ENCODE measurements at regions of chr2 and their contacts with region 1.

Region 1: GRCh38 chr2:27754138-27754588 is 17.4 kb upstream of the MRPL33 start:
- DNase-seq: peak; percentile 79
- ATAC-seq: peak; percentile 86
- H3K4me3 ChIP-seq: peak overlapping the region; percentile 82 to 90 (median 89)
- H3K27ac ChIP-seq: no peak overlapping the region
- H3K4me1 ChIP-seq: peaks cover 62% of the 10 kb centered on the region
- H3K27me3 ChIP-seq: no peaks in the 10 kb centered on the region
- CTCF ChIP-seq: peak; percentile 99
- EP300 ChIP-seq: peak in 1 of 2 experiments; percentile 39; a peak in 2 of 4 replicates
- POLR2A ChIP-seq: no peak
- RAD21 ChIP-seq: peak; percentile 98

Region 2: GRCh38 chr2:27390822-27391679 is 363.1 kb before region 1 on chr2:
- CTCF ChIA-PET with region 1: no interaction called
- POLR2A ChIA-PET with region 1: no interaction called
- in situ Hi-C with region 1: no loop called
- intact Hi-C with region 1: no loop called
- DNase-seq: no peak
- ATAC-seq: no peak
- H3K4me3 ChIP-seq: no peak overlapping the region
- H3K27ac ChIP-seq: no peak overlapping the region
- H3K4me1 ChIP-seq: no peaks in the 10 kb centered on the region
- H3K27me3 ChIP-seq: no peaks in the 10 kb centered on the region
- CTCF ChIP-seq: no peak
- EP300 ChIP-seq: no peak
- POLR2A ChIP-seq: no peak
- RAD21 ChIP-seq: no peak

Region 3: DNA sequence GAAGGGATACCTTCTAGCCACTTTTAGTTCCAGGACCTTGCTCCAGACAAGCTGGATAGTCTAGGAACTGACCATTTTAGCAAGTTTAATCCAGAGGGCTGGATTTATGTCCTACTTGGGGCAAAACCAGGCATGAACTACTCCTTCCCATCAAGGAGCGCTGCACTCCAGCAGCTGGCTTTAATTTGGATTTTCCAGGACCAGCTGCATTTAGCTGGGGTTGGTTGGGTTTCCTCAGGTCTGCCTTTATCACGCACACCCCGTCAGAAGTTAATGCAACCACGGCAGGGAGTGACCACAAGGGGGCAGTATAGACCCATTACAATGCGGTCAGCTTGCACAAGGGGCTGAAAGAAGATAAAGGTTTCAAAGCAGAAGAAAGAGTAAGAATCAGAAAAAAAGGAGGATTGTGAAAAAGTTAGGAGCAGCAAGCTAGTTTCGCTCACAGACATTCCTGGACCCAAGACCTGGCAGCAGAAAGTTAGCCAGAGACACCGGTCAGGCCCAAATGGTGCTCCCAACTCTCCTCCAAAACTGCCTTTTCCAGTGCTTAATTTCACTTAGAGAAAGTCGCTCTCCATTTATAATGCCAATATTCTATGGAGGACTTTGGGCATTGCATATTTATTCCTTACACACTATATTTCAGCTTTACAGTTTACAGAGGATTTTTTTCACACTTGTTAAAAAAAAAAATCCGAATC is 50.4 kb before region 1 on chr2:
- CTCF ChIA-PET with region 1: interaction called, 4 read pairs
- POLR2A ChIA-PET with region 1: interaction called, 13 read pairs
- in situ Hi-C with region 1: loop called (anchors 5 kb)
- intact Hi-C with region 1: loop called (anchors 1 kb)
- DNase-seq: peak; percentile 80
- ATAC-seq: peak; percentile 85
- H3K4me3 ChIP-seq: no peak overlapping the region
- H3K27ac ChIP-seq: no peak overlapping the region
- H3K4me1 ChIP-seq: peaks cover 55% of the 10 kb centered on the region
- H3K27me3 ChIP-seq: no peaks in the 10 kb centered on the region
- CTCF ChIP-seq: peak; percentile 96
- EP300 ChIP-seq: no peak
- POLR2A ChIP-seq: no peak
- RAD21 ChIP-seq: peak; percentile 87

Region 4: DNA sequence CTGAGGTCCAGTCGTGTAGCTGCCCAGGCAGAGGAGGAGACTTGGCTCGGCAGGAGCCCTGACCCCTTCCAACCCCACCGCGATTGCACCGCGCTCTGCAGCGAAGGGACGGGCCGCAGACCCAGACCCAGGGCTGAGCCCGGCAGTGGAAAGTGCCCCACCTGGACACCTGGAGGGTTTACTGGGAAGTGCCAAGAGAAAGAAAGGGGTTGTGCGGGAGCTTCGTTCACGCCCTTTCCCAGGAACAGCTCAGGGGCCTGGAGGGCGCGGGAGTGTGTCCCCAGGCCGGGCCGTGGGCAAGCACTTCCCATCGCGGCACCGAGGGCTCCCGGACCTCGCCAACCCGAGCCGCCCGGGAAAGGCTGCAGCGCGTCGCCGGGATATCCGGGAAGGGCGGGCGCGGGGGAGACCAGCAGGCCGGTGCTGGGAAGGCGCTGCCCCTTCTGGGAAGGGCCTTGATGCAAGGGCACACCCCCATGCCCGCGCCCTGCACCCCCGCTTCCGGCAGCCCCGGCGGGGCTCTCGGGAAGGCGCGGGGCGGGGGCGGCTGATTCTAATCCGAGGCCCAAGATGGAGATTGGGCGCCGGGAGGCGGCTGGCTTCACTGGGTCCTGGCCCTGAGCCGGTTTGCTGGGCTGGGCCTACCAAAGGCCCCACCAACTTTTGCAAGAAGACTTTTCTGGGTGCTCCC is 18.8 kb before region 1 on chr2:
- CTCF ChIA-PET with region 1: no interaction called
- POLR2A ChIA-PET with region 1: interaction called, 248 read pairs
- in situ Hi-C with region 1: no loop called
- intact Hi-C with region 1: loop called (anchors 1 kb)
- DNase-seq: no peak
- ATAC-seq: no peak
- H3K4me3 ChIP-seq: no peak overlapping the region
- H3K27ac ChIP-seq: no peak overlapping the region
- H3K4me1 ChIP-seq: peaks cover 47% of the 10 kb centered on the region
- H3K27me3 ChIP-seq: no peaks in the 10 kb centered on the region
- CTCF ChIP-seq: no peak
- EP300 ChIP-seq: no peak
- POLR2A ChIP-seq: no peak
- RAD21 ChIP-seq: no peak

Region 5: GRCh38 chr2:27765621-27766269 is 11.6 kb after region 1 on chr2:
- CTCF ChIA-PET with region 1: no interaction called
- POLR2A ChIA-PET with region 1: interaction called, 41 read pairs
- in situ Hi-C with region 1: no loop called
- intact Hi-C with region 1: no loop called
- DNase-seq: no peak
- ATAC-seq: peak; percentile 10; the same call in 2 of the 3 replicates
- H3K4me3 ChIP-seq: peak overlapping the region in 1 of 3 experiments; percentile 47; a peak in 2 of 6 replicates
- H3K27ac ChIP-seq: peak overlapping the region; percentile 8
- H3K4me1 ChIP-seq: peaks cover 61% of the 10 kb centered on the region
- H3K27me3 ChIP-seq: no peaks in the 10 kb centered on the region
- CTCF ChIP-seq: no peak
- EP300 ChIP-seq: no peak
- POLR2A ChIP-seq: peak; percentile 17 to 56; a peak in 2 of 4 replicates
- RAD21 ChIP-seq: no peak

Region 6: DNA sequence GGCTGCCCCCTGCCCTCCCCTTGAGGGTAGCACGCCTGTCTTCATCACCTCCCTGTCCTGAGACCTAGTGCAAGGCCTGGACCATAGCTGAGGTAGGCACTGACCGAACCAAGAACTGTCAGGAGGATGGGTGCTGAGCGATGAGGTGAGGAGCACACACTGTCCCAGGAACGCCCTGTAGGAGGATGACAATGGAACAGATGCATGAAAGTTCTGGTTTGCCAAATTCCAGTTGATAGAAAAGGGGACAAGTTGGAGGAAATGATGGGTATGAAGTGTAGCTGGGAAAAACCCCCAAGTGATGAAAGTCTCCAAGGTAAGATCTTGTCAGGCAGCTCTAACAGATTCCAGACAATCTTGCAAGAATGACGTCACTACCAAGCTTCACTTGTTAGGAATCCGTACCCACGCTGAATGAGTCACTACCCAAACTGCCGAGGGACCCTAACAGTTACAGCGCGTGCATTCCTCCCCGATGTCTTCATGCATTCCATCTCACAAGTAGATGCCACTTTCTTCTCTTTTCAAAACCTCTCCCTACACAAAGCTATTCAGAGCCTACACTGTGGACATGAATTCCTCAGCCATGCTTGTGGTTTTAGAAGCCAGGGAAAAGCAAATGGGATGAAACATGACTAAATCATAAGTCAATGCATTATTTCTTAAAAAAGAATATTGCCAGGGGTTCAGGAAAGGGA is 44.9 kb after region 1 on chr2:
- CTCF ChIA-PET with region 1: no interaction called
- POLR2A ChIA-PET with region 1: interaction called, 10 read pairs
- in situ Hi-C with region 1: no loop called
- intact Hi-C with region 1: no loop called
- DNase-seq: peak; percentile 89
- ATAC-seq: no peak
- H3K4me3 ChIP-seq: no peak overlapping the region
- H3K27ac ChIP-seq: no peak overlapping the region
- H3K4me1 ChIP-seq: peaks cover 41% of the 10 kb centered on the region
- H3K27me3 ChIP-seq: no peaks in the 10 kb centered on the region
- CTCF ChIP-seq: no peak
- EP300 ChIP-seq: no peak
- POLR2A ChIP-seq: no peak
- RAD21 ChIP-seq: no peak

Region 7: GRCh38 chr2:27823569-27823968 is 69.4 kb after region 1 on chr2:
- CTCF ChIA-PET with region 1: no interaction called
- POLR2A ChIA-PET with region 1: no interaction called
- in situ Hi-C with region 1: no loop called
- intact Hi-C with region 1: no loop called
- DNase-seq: no peak
- ATAC-seq: no peak
- H3K4me3 ChIP-seq: no peak overlapping the region
- H3K27ac ChIP-seq: no peak overlapping the region
- H3K4me1 ChIP-seq: no peaks in the 10 kb centered on the region
- H3K27me3 ChIP-seq: no peaks in the 10 kb centered on the region
- CTCF ChIP-seq: no peak
- EP300 ChIP-seq: no peak
- POLR2A ChIP-seq: no peak
- RAD21 ChIP-seq: no peak

Region 8: GRCh38 chr2:28392297-28393113 is 638.3 kb after region 1 on chr2 and contains the start of gene FOSL2:
- CTCF ChIA-PET with region 1: interaction called, 4 read pairs
- POLR2A ChIA-PET with region 1: interaction called, 38 read pairs
- in situ Hi-C with region 1: loop called (anchors 10 kb)
- intact Hi-C with region 1: loop called (anchors 2 kb)
- DNase-seq: peak; percentile 100
- ATAC-seq: peak; percentile 85
- H3K4me3 ChIP-seq: peak within 1 kb of the TSS; percentile 91 to 95 (median 93)
- H3K27ac ChIP-seq: peak within 1 kb of the TSS; percentile 88
- H3K4me1 ChIP-seq: peaks cover 45% of the 10 kb centered on the region
- H3K27me3 ChIP-seq: peaks cover 1 to 20% of the 10 kb centered on the region in 2 experiments; a peak in 3 of 5 replicates
- CTCF ChIP-seq: peak; percentile 36
- EP300 ChIP-seq: peak; percentile 46 to 55; a peak in 2 of 4 replicates
- POLR2A ChIP-seq: peak in 1 of 2 experiments; percentile 88; a peak in 2 of 4 replicates
- RAD21 ChIP-seq: peak; percentile 53
- total RNA-seq, gene FOSL2: 2.3 and 3.4 TPM in 2 replicates